ENCODE measurements at regions of chr4 and their contacts with region 1.

Region 1: DNA sequence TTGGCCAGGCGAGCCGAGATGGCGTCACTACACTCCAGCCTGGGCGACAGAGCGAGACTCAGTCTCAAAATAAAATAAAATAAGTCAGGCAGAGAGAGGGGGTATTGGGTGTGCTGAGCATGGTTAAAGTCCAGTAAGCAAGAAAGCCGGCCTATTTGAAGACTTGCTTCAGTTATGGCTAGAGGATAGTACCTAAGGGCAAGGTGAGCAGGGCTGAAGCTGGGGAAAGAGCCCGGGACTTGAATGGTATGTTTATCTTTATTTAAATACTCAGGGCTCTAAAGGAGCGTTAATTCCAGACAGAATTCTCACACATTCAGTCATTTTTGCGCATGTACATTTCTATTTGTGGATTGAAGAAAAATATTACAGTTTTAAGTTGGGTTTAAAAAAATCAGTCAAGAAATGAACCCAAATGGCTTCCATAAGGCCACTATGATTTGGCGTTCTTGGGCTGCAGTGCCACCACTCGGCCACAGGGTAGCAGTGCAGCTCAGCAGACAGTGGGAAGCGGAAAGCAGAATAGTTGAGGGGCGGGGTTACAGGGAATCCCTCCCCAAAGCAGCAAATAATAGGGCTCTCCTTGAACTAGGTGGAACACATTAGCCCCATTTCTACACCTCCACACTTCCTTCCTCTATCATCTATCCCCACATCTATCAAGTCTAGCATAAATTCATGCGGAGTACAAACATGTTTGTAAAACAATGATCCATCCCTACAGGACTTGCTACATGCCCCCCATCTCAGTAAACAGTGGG is 37.2 kb upstream of the SH3D19 start:
- DNase-seq: peak; percentile 84 to 86
- H3K4me3 ChIP-seq: no peak overlapping the region
- H3K27ac ChIP-seq: no peak overlapping the region
- H3K4me1 ChIP-seq: no peaks in the 10 kb centered on the region
- H3K27me3 ChIP-seq: no peaks in the 10 kb centered on the region
- CTCF ChIP-seq: peak; percentile 88 to 99 (median 97)
- POLR2A ChIP-seq: no peak

Region 2: DNA sequence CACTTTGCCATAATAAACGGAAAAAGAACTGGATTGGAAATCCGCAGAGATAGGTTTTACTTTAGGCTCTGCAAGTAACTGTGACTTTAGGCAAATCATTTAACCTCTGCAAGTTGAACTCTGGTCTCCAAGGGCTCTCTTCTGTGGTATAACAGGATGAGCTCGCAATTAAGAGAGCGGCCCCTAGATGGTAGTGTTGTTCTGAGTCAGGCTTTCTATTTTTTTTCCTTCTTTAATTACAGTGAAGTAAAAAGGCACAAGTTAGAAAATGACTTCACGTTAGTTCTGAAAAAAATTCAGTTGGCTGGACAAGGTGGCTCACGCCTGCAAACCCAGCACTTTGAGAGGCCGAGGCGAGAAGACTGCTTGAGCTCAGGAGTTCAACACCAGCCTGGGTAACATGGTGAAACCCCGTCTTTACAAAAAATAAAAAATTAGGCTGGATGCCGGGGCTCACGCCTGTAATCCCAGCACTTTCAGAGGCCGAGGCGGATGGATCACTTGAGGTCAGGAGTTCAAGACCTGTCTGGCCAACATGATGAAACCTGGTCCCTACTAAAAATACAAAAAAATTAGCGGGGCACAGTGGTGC is 245.1 kb before region 1 on chr4:
- intact Hi-C with region 1: loop called (anchors 10 kb)
- DNase-seq: peak; percentile 55 to 60
- H3K4me3 ChIP-seq: no peak overlapping the region
- H3K27ac ChIP-seq: no peak overlapping the region
- H3K4me1 ChIP-seq: no peaks in the 10 kb centered on the region
- H3K27me3 ChIP-seq: no peaks in the 10 kb centered on the region
- CTCF ChIP-seq: peak; percentile 35 to 77 (median 66)
- POLR2A ChIP-seq: no peak

Region 3: GRCh38 chr4:151152028-151152427 is 210.6 kb before region 1 on chr4:
- intact Hi-C with region 1: no loop called
- DNase-seq: no peak
- H3K4me3 ChIP-seq: no peak overlapping the region
- H3K27ac ChIP-seq: no peak overlapping the region
- H3K4me1 ChIP-seq: no peaks in the 10 kb centered on the region
- H3K27me3 ChIP-seq: no peaks in the 10 kb centered on the region
- CTCF ChIP-seq: no peak
- POLR2A ChIP-seq: no peak

Region 4: GRCh38 chr4:151291485-151291884 is 71.1 kb before region 1 on chr4:
- intact Hi-C with region 1: no loop called
- DNase-seq: no peak
- H3K4me3 ChIP-seq: no peak overlapping the region
- H3K27ac ChIP-seq: no peak overlapping the region
- H3K4me1 ChIP-seq: no peaks in the 10 kb centered on the region
- H3K27me3 ChIP-seq: no peaks in the 10 kb centered on the region
- CTCF ChIP-seq: no peak
- POLR2A ChIP-seq: no peak

Region 5: GRCh38 chr4:151517896-151518295 is 155.3 kb after region 1 on chr4:
- intact Hi-C with region 1: no loop called
- DNase-seq: no peak
- H3K4me3 ChIP-seq: no peak overlapping the region
- H3K27ac ChIP-seq: no peak overlapping the region
- H3K4me1 ChIP-seq: peaks cover 11 to 18% of the 10 kb centered on the region in 2 donors
- H3K27me3 ChIP-seq: no peaks in the 10 kb centered on the region
- CTCF ChIP-seq: no peak
- POLR2A ChIP-seq: no peak

Region 6: GRCh38 chr4:151652841-151653547 is 290.4 kb after region 1 on chr4:
- intact Hi-C with region 1: no loop called
- DNase-seq: no peak
- H3K4me3 ChIP-seq: no peak overlapping the region
- H3K27ac ChIP-seq: no peak overlapping the region
- H3K4me1 ChIP-seq: no peaks in the 10 kb centered on the region
- H3K27me3 ChIP-seq: no peaks in the 10 kb centered on the region
- CTCF ChIP-seq: no peak
- POLR2A ChIP-seq: no peak

Measured in thyroid gland (tissue), 4 donors.